ENCODE measurements at regions of chr10 and their contacts with region 1.

Region 1: GRCh38 chr10:128069351-128070051 is 56.7 kb downstream of the MKI67 start:
- DNase-seq: peak; percentile 73
- H3K4me3 Mint-ChIP-seq: no peak overlapping the region
- H3K27ac Mint-ChIP-seq: no peak overlapping the region
- H3K4me1 Mint-ChIP-seq: no peaks in the 10 kb centered on the region
- H3K27me3 Mint-ChIP-seq: no peaks in the 10 kb centered on the region
- CTCF ChIP-seq: peak; percentile 47

Region 2: GRCh38 chr10:127715782-127716378 is 353.6 kb before region 1 on chr10:
- CTCF ChIA-PET with region 1: interaction called, 5 read pairs
- intact Hi-C with region 1: loop called (anchors 1 kb)
- DNase-seq: no peak
- H3K4me3 Mint-ChIP-seq: no peak overlapping the region
- H3K27ac Mint-ChIP-seq: no peak overlapping the region
- H3K4me1 Mint-ChIP-seq: no peaks in the 10 kb centered on the region
- H3K27me3 Mint-ChIP-seq: peaks cover 28% of the 10 kb centered on the region
- CTCF ChIP-seq: no peak

Region 3: DNA sequence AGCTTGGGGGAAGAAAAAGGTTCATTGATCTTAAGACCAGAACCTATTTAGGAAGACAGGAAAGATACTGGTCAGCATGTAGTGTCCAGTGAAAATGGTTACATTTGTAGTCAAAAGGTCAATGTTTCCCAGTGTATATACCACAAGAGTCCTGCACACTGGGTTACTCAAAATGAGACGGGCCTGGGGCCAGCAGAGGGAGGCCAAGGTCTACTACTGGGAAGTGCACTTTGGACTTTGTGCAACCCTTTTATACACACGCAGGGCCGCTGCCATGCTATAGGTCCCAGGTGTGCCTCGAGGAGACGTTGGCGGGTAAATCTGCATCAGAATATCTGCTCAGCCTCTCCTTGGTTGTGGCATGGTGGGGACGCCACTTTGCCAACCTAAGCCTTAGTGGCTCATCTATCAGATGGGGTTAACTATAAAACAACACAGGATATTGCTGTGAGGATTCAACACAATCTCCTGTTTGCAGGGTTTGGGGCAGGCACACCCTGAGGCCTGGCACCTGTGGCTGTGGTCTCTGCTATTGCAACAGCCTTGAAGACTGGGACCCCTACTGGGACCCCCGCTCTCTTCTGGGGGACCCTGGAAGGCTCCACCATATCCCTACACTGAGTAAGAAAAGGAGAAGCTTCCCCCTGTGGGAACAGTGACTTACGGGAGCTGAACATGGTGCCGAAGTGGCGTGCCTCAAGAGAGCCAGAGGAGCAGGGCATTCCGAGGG is 196.5 kb before region 1 on chr10:
- CTCF ChIA-PET with region 1: interaction called, 3 read pairs
- intact Hi-C with region 1: loop called (anchors 1 kb)
- DNase-seq: peak; percentile 50
- H3K4me3 Mint-ChIP-seq: no peak overlapping the region
- H3K27ac Mint-ChIP-seq: no peak overlapping the region
- H3K4me1 Mint-ChIP-seq: peaks cover 8% of the 10 kb centered on the region
- H3K27me3 Mint-ChIP-seq: peaks cover 39% of the 10 kb centered on the region
- CTCF ChIP-seq: peak; percentile 39

Region 4: DNA sequence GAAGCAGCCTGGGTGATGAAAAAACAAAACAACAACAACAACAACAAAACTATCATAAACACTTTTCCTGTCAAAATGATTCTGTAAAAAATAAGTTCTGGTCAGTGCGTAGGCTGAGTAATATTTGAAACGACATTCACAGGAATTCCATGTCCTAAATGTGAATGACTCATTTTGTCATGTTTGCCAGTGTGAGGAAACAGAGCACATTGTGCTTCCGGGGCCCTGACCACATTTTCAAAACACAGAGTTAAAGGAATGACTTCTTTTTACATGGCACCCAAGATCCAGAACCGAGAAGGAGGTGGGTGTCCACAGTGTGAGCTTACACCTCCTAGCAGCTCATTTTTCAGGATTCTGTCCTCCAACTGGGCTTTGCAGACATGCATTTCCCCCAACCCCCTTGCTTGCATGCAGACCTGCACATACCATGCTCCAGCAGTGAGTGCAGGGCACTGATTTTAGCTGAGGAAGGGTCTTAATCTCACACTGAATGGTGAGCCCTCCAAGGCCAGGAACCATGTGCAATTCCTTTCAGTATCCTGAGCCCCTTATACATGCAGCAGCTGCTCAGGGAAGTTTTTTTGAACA is 179.8 kb before region 1 on chr10:
- CTCF ChIA-PET with region 1: no interaction called
- intact Hi-C with region 1: loop called (anchors 5 kb)
- DNase-seq: peak; percentile 17
- H3K4me3 Mint-ChIP-seq: no peak overlapping the region
- H3K27ac Mint-ChIP-seq: no peak overlapping the region
- H3K4me1 Mint-ChIP-seq: peaks cover 10% of the 10 kb centered on the region
- H3K27me3 Mint-ChIP-seq: no peaks in the 10 kb centered on the region
- CTCF ChIP-seq: no peak

Region 5: DNA sequence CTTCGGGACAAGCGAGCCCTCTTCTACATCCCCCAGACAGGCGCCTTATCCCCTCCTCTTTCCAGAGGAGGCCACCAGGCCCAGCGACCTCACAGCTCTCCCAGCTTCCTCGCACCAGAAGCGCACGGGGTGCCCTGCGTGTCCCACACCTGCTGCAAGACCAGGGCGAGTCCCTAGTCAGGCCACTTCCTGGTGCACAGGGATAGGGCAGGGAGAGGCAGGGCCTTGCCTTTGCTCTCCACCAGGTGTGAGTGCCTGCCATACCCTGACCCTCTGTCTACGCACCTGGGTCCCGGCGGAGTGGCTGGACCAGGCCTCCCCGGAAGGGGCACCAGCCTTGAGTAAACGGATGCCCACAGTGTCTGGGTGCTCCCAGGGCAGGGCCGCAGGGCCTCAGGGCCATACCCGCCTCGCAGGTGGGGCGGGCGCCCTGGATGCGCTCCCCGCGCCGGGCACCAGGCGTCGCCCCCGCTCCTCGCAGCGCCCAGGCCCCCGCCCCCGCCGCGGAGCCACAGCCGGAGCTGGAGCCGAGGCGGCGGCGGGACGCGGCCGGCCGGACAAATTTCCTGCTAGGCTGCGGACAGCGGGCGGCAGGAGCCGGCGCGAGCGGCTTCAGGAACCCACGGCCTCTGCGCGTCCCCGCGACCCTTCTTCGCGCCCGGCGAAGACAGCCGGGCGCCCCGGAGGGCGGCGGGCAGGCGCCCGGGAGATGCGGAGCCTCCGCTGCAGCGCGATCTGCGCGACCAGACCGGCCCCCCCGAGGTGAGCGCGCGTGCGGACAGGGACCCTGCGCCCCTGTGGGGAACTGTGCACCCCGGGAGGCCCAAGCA is 162.7 kb before region 1 on chr10 and contains the start of gene PTPRE:
- CTCF ChIA-PET with region 1: interaction called, 4 read pairs
- intact Hi-C with region 1: loop called (anchors 5 kb)
- DNase-seq: peak; percentile 86
- H3K4me3 Mint-ChIP-seq: peak within 1 kb of the TSS; percentile 53
- H3K27ac Mint-ChIP-seq: peak within 1 kb of the TSS; percentile 9
- H3K4me1 Mint-ChIP-seq: peaks cover 34% of the 10 kb centered on the region
- H3K27me3 Mint-ChIP-seq: no peaks in the 10 kb centered on the region
- CTCF ChIP-seq: peak; percentile 67
- total RNA-seq, gene PTPRE: 5.9 and 7.6 TPM in 2 replicates

Region 6: DNA sequence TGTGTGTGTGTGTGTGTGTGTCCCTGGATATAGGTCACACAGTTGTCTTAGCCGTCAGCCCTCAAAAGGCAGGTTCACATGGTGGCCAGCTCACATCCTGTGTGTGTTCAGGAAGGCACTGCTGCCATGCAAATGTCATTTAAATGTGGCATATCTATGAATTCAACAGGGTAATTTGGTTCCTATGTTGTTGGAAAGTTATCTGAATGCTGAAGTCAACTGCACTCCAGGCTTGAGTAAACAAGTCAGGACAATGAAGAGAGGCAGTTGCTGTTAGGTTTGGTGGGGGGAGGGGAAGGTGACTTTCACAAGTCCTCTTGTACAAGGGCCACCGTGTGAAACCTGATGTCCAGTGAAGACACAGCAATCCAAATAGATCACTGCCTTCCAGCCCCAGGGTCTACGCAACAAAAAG is 101.5 kb before region 1 on chr10:
- CTCF ChIA-PET with region 1: no interaction called
- intact Hi-C with region 1: no loop called
- DNase-seq: no peak
- H3K4me3 Mint-ChIP-seq: no peak overlapping the region
- H3K27ac Mint-ChIP-seq: no peak overlapping the region
- H3K4me1 Mint-ChIP-seq: peaks cover 20% of the 10 kb centered on the region
- H3K27me3 Mint-ChIP-seq: no peaks in the 10 kb centered on the region
- CTCF ChIP-seq: no peak

Region 7: GRCh38 chr10:128011175-128011979 is 58.1 kb before region 1 on chr10:
- CTCF ChIA-PET with region 1: interaction called, 8 read pairs
- intact Hi-C with region 1: loop called (anchors 10 kb)
- DNase-seq: peak; percentile 83
- H3K4me3 Mint-ChIP-seq: peak overlapping the region; percentile 39
- H3K27ac Mint-ChIP-seq: no peak overlapping the region
- H3K4me1 Mint-ChIP-seq: peaks cover 21% of the 10 kb centered on the region
- H3K27me3 Mint-ChIP-seq: no peaks in the 10 kb centered on the region
- CTCF ChIP-seq: peak; percentile 84

Region 8: DNA sequence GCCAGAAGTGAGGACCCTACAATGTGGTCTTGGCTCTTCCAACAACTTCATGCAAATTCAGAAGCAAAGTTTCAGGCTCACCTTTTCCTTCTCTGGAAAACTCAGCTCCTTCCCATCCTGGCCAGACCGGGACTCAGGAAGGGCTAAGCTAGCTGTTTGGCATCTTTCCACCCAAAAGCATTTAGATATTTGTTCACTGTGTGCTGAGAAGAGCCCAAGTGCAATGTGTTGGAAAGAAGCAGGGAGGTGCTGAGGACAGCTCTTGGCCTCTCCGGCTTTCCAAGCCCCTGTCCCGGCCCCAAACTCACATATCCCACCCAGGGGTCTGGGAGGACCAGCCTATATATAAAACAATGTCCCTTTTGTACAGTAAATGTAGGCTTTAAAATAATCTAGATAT is 12.2 kb after region 1 on chr10:
- CTCF ChIA-PET with region 1: no interaction called
- intact Hi-C with region 1: no loop called
- DNase-seq: no peak
- H3K4me3 Mint-ChIP-seq: no peak overlapping the region
- H3K27ac Mint-ChIP-seq: no peak overlapping the region
- H3K4me1 Mint-ChIP-seq: no peaks in the 10 kb centered on the region
- H3K27me3 Mint-ChIP-seq: no peaks in the 10 kb centered on the region
- CTCF ChIP-seq: no peak